ENCODE measurements at regions of chr7 and their contacts with region 1.

Region 1: GRCh38 chr7:158829342-158830210 is at the start of gene ESYT2:
- DNase-seq: peak; percentile 99 to 100
- ATAC-seq: peak; percentile 78 to 89 (median 80)
- H3K4me3 ChIP-seq: peak within 1 kb of the TSS; percentile 67
- H3K4me3 Mint-ChIP-seq: peak within 1 kb of the TSS; percentile 97
- H3K27ac ChIP-seq: peak within 1 kb of the TSS; percentile 97
- H3K27ac Mint-ChIP-seq: peak within 1 kb of the TSS; percentile 82 to 92
- H3K4me1 ChIP-seq: peaks cover 38% of the 10 kb centered on the region
- H3K4me1 Mint-ChIP-seq: peaks cover 37 to 41% of the 10 kb centered on the region in 2 donors
- H3K27me3 ChIP-seq: no peaks in the 10 kb centered on the region
- H3K27me3 Mint-ChIP-seq: no peaks in the 10 kb centered on the region
- CTCF ChIP-seq: no peak
- total RNA-seq, gene ESYT2: 137 to 163 (median 160) TPM

Region 2: DNA sequence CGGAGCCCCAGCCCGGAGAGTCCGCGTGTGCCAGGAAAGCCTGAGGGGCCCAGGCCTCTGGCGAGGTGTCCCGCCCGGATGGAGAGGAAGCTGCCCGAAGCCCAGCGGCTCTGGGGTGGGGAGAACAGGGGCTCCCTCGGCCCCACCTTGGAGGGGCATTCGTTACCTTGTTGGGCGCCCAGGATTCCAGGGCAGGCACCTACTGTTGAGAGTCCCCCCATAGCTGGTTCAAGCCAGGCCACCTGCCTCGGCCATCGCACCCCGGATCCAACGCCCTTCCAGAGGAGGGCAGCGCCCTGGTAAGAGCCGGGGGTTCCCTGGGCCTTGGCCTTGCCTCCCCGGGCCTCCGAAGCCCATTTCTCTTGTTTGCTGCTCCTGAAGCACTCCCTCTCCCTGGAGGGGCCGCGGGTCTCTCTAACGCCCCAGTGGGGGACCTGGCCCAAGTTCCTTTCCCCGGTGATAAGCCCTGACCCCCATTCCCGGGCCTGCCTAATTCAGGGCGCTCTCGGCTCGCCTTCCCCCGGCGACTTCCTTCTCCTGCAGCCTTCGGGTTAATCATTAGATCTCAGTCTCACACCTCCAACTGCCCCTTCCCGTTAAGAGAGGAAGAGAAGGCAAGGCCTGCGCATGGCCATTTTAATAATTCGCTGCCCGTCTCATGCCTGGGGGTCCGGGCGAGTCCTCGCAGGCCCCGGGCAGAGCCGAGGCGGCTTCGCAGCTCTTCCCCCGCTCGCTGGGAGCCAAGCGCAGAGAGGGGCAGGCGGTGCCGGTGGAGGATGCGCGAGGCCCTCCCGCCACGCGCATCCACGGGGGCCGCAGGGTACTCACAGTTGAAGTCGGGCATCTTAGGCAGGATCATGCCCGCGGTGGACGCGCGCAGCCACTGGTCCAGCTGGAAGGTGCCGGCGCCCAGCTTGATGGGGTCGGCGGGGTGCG is 1820.5 kb before region 1 on chr7:
- intact Hi-C with region 1: no loop called
- DNase-seq: no peak
- ATAC-seq: no peak
- H3K4me3 ChIP-seq: no peak overlapping the region
- H3K4me3 Mint-ChIP-seq: peak overlapping the region; percentile 50
- H3K27ac ChIP-seq: no peak overlapping the region
- H3K27ac Mint-ChIP-seq: no peak overlapping the region
- H3K4me1 ChIP-seq: peaks cover 13% of the 10 kb centered on the region
- H3K4me1 Mint-ChIP-seq: peaks cover 4 to 5% of the 10 kb centered on the region in 2 donors
- H3K27me3 ChIP-seq: peaks cover 57% of the 10 kb centered on the region
- H3K27me3 Mint-ChIP-seq: peaks cover 54 to 56% of the 10 kb centered on the region in 2 donors
- CTCF ChIP-seq: no peak

Region 3: DNA sequence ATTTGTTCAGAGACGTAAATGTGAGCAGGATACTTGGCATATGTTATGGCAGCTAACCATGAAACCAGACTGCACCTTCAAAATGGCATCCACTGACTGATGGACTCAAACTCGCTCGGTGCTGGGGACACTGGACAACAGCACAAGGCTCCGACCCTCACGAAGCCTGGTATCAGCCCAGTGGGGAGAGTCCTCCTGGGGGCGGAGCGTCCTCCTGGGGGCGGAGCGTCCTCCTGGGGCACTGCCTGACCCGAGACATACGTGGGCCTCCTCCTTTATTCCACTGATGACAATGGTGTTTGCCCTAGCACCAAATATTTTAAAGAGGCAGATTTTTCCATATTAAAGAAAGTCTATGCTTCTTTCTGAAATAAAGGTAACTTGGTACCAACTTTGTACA is 39.7 kb before region 1 on chr7:
- intact Hi-C with region 1: loop called (anchors 5 kb)
- DNase-seq: no peak
- ATAC-seq: peak in 1 of 3 donors; percentile 23
- H3K4me3 ChIP-seq: no peak overlapping the region
- H3K4me3 Mint-ChIP-seq: no peak overlapping the region
- H3K27ac ChIP-seq: no peak overlapping the region
- H3K27ac Mint-ChIP-seq: peak overlapping the region in 1 of 2 donors; percentile 14
- H3K4me1 ChIP-seq: no peaks in the 10 kb centered on the region
- H3K4me1 Mint-ChIP-seq: peaks cover 13 to 22% of the 10 kb centered on the region in 2 donors
- H3K27me3 ChIP-seq: no peaks in the 10 kb centered on the region
- H3K27me3 Mint-ChIP-seq: no peaks in the 10 kb centered on the region
- CTCF ChIP-seq: no peak

Measured in natural killer cell (primary cell).